A673 (cell line): ENCODE measurements at regions of chr20 and their contacts with region 1.

Region 1: DNA sequence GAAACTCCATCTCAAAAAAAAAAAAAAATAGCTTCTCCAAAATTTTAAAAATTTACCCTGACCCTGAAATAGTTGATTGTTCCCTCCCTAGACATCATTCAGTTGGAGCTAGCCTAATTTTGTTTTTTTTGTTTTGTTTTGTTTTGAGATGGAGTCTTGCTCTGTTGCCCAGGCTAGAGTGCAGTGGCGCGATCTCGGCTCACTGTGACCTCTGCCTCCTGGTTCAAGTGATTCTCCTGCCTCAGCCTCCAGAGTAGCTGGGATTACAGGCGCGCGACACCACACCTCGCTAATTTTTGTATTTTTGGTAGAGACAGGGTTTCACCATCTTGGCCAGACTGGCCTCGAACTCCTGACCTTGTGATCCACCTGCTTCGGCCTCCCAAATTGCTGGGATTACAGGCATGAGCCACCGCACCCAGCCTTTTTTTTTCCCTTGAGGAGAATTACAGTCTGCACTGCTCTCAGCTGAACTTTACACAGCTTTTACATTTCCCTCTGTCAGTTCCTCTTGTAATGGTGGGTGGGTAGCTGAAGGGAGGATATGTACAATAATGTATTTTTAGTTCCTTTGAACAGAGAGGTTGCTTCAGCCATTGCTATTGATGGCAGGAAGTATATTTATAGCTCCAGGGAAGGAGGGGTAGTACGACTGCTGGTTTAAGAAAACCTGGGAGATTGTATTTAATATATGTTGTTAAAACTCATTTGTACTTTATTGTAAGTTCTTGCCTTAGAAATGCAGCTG is 27.7 kb downstream of the PTPRA start:
- DNase-seq: no peak
- H3K4me3 ChIP-seq: no peak overlapping the region
- H3K27ac ChIP-seq: no peak overlapping the region
- H3K4me1 ChIP-seq: no peaks in the 10 kb centered on the region
- H3K27me3 ChIP-seq: no peaks in the 10 kb centered on the region
- CTCF ChIP-seq: no peak

Region 2: GRCh38 chr20:2133318-2134183 is 767.5 kb before region 1 on chr20:
- CTCF ChIA-PET with region 1: no interaction called
- POLR2A ChIA-PET with region 1: no interaction called
- intact Hi-C with region 1: no loop called
- DNase-seq: no peak
- H3K4me3 ChIP-seq: no peak overlapping the region
- H3K27ac ChIP-seq: no peak overlapping the region
- H3K4me1 ChIP-seq: peaks cover 5% of the 10 kb centered on the region
- H3K27me3 ChIP-seq: no peaks in the 10 kb centered on the region
- CTCF ChIP-seq: no peak

Region 3: GRCh38 chr20:2838170-2838797 is 62.7 kb before region 1 on chr20:
- CTCF ChIA-PET with region 1: no interaction called
- POLR2A ChIA-PET with region 1: interaction called, 14 read pairs
- intact Hi-C with region 1: no loop called
- DNase-seq: no peak
- H3K4me3 ChIP-seq: no peak overlapping the region
- H3K27ac ChIP-seq: no peak overlapping the region
- H3K4me1 ChIP-seq: peaks cover 15% of the 10 kb centered on the region
- H3K27me3 ChIP-seq: no peaks in the 10 kb centered on the region
- CTCF ChIP-seq: no peak

Region 4: DNA sequence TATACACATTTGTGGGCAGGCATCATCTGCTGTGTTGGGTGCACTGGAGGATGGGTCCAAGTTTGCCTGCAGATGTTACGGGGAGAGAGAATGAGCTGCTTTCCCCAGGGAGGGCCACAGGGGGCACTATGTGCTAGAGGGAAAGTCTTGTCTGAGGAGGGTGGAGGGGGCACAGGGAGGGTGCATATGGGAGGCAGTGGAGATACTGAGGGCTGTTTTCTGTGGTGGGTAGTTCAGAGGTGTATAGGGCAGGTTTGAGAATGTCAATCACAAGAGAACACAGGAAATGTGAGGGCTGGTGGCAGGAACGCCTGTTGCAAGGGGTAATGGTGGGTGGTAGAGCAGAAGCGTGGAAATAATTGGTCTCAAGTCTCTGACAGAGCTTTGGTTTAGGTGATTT is 35.4 kb before region 1 on chr20:
- CTCF ChIA-PET with region 1: no interaction called
- POLR2A ChIA-PET with region 1: no interaction called
- intact Hi-C with region 1: no loop called
- DNase-seq: no peak
- H3K4me3 ChIP-seq: no peak overlapping the region
- H3K27ac ChIP-seq: no peak overlapping the region
- H3K4me1 ChIP-seq: peaks cover 6% of the 10 kb centered on the region
- H3K27me3 ChIP-seq: no peaks in the 10 kb centered on the region
- CTCF ChIP-seq: no peak

Region 5: DNA sequence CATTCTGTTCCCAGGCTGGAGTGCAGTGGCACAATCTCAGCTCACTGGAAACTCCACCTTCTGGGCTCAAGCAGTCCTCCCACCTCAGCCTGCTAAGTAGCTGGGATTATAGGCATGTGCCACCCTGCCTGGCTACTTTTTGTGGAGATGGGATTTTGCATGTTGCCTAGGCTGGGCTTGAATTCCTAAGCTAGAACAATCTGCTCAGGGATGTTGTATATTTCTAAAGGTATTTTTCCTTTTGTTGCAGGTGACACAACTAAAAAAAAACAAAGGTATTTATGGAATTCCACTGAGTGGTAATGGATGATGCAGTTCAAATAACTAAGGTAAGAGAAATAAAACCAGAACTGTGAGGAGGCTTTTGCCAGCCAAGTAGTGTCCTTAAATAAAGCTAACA is 21.9 kb after region 1 on chr20:
- CTCF ChIA-PET with region 1: no interaction called
- POLR2A ChIA-PET with region 1: interaction called, 15 read pairs
- intact Hi-C with region 1: no loop called
- DNase-seq: no peak
- H3K4me3 ChIP-seq: no peak overlapping the region
- H3K27ac ChIP-seq: no peak overlapping the region
- H3K4me1 ChIP-seq: no peaks in the 10 kb centered on the region
- H3K27me3 ChIP-seq: no peaks in the 10 kb centered on the region
- CTCF ChIP-seq: no peak